K562 (cell line): ENCODE measurements at regions of chr22 and their contacts with region 1.

Region 1: DNA sequence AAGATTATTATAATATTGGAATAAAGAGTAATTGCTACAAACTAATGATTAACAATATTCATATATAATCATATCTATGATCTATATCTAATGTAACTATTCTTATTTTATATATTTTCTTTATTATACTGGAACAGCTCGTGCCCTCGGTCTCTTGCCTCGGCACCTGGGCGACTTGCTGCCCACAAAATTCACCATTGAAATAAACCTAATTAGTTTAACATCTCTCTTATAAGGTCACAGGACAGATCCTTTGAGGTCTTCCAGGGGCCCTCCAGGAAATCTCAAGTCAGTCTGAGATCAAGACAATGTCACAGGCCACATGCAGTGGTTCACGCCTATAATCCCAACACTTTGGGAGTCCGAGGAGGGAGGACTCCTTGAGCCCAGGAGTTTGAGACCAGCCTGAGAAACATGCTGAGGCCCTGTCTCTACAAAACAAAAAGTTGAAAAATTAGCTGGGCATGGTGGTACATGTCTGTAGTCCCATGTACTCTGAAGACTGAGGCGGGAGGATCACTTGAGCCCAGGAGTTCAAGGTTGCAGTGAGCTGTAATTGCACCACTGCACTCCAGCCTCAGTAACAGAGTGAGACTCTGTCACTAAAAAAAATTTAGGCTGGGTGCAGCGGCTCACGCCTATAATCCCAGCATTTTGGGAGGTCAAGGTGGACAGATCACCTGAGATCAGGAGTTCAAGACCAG is 6.6 kb upstream of the TXNRD2 start:
- DNase-seq: no peak
- ATAC-seq: no peak
- H3K4me3 ChIP-seq: no peak overlapping the region
- H3K27ac ChIP-seq: peak overlapping the region; percentile 92; the same call in 2 of the 3 replicates
- H3K4me1 ChIP-seq: peaks cover 28 to 30% of the 10 kb centered on the region in 2 experiments
- H3K27me3 ChIP-seq: no peaks in the 10 kb centered on the region
- CTCF ChIP-seq: no peak
- EP300 ChIP-seq: no peak
- POLR2A ChIP-seq: no peak
- RAD21 ChIP-seq: no peak

Region 2: DNA sequence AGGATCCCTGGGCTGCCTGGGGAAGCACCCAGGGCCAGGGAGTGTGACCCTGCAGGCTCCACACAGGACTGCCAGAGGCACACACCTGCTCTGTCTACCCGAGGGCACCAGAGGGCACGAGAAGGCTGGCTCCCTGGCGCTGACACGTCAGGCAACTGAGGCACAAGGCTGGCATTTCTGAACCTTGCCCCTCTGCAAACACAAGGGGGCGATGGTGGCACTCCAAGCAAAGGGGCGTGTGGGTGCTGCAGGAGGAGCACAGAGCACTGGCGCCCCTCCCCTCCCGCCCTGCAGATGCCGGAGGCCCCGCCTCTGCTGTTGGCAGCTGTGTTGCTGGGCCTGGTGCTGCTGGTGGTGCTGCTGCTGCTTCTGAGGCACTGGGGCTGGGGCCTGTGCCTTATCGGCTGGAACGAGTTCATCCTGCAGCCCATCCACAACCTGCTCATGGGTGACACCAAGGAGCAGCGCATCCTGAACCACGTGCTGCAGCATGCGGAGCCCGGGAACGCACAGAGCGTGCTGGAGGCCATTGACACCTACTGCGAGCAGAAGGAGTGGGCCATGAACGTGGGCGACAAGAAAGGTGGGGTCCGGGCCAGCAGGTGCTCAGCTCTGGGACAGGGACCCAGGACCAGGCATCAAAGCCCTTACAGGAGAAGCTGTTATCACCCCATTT is 14.2 kb after region 1 on chr22:
- CTCF ChIA-PET with region 1: no interaction called
- POLR2A ChIA-PET with region 1: interaction called, 21 read pairs
- in situ Hi-C with region 1: no loop called
- intact Hi-C with region 1: no loop called
- DNase-seq: peak; percentile 96 to 100 (median 98)
- ATAC-seq: peak; percentile 68
- H3K4me3 ChIP-seq: no peak overlapping the region
- H3K27ac ChIP-seq: no peak overlapping the region
- H3K4me1 ChIP-seq: peaks cover 27 to 73% of the 10 kb centered on the region in 2 experiments
- H3K27me3 ChIP-seq: no peaks in the 10 kb centered on the region
- CTCF ChIP-seq: peak; percentile 95 to 99 (median 96)
- EP300 ChIP-seq: no peak
- POLR2A ChIP-seq: peak; percentile 65; the same call in 1 of the 2 replicates
- RAD21 ChIP-seq: peak; percentile 45 to 79; a peak in 3 of 4 replicates